Uterus (tissue), 4 donors: ENCODE measurements at regions of chr15 and their contacts with region 1.

Region 1: DNA sequence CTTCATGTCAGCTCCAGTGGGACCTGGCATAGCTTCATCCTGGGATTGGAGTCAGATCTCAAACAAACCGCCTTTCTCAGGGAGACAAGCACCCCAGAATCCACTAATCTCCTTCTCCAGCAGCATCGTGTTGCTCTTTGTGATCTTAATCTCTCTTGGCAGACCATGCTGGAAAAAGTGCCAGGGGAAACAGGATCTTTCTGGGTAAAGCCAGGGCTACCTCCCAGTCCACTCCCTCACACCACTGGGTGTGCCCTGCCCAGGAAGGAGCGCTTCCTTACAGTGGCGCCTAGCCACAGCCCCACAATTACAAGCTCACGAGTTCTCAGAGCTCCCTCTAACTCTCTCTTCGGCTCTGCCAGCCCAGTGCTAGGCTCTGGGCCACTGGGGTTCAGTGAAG is 32.2 kb downstream of the RPLP1 start:
- DNase-seq: no peak
- H3K4me3 ChIP-seq: no peak overlapping the region
- H3K27ac ChIP-seq: no peak overlapping the region
- H3K4me1 ChIP-seq: peaks cover 3 to 6% of the 10 kb centered on the region in 2 donors
- H3K27me3 ChIP-seq: no peaks in the 10 kb centered on the region
- CTCF ChIP-seq: no peak
- POLR2A ChIP-seq: no peak

Region 2: DNA sequence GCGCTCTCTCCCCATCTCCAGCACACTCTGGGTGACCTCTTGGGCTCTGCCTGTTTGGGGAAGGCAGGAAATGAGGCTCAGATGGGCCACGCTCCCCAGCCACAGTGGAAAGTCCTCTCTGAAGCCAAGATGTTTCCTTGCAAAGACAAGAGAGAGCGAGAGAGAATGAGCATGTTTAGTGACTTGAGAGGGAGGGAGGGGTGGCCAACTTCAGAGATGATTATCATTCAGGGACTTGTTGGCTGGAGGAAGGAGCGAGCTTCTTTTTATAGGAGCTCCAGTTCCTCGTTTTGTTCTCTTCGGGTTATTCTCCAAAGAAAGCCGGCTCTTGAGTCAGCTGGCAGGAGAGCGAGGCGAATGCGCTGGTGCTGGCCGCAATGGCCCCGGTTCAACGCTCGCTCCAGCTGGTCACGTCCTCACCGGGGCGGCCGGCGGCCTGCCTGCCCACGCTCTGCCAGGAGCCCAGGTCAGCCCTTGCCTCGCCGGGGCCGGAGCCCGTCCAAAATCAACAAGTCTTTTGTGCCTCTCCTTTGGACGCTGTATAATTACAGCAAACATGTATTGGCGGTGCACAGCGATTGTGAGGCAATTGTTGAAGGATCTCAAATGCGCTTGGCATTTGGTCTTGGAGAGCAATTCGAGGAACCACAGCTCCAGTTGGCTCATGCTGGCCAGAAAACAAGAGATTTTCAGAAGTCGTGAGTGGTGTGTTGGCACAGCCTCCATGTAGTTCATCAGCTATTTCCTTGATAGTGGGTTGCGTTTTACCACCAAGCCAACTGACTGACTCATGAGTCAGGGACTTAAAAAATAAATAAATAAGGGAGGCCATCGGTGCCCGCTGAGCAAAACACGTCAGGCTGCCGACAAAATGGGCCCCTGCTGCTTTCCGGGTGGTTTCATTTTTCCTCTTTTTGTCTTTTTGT is 989.9 kb after region 1 on chr15:
- intact Hi-C with region 1: loop called (anchors 5 kb)
- DNase-seq: peak; percentile 44 to 59
- H3K4me3 ChIP-seq: no peak overlapping the region
- H3K27ac ChIP-seq: peak overlapping the region; percentile 51 to 62
- H3K4me1 ChIP-seq: peaks cover 0 to 17% of the 10 kb centered on the region in 2 donors
- H3K27me3 ChIP-seq: no peaks in the 10 kb centered on the region
- CTCF ChIP-seq: no peak
- POLR2A ChIP-seq: no peak